Activated CD8-positive, alpha-beta T cell treated with anti-CD3 and anti-CD28 coated beads for 36 hours (primary cell): ENCODE measurements at regions of chr7 and their contacts with region 1.

Region 1: DNA sequence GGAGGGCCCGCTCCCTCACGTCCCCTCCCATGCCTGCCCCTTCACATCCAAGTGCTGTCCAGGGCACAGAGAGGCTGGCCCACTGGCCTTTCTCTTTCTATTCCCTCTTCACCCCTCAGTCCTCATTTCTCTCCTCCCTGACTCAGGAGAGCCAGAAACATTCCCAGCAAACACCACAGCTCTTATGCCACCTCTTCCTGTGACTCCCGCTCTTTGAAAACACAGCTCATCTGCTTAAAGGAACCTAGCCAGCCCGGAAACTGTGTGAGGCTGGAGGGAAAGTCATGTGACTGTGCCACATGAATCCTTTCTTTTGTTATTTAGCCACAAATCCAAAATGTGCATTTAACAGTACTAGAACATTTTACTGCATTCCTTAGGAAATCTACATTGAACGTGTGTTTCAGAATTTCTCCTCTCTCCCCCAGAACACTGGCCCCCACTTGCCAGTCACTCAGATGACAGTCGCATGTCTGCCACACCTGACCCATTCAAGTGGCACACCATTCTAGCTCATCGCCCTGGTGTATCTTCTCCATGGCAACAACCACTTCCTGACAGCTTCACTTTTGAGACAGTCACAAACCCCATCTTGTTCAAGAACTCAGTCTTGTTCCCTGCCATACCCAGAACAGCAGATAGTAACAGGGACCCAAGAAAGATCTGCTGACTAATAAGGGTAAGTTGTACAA is 42.8 kb downstream of the GRB10 start:
- DNase-seq: peak; percentile 76
- ATAC-seq: peak; percentile 99
- H3K4me3 Mint-ChIP-seq: peak overlapping the region; percentile 30
- H3K27ac Mint-ChIP-seq: peak overlapping the region; percentile 63
- H3K4me1 Mint-ChIP-seq: peaks cover 17% of the 10 kb centered on the region
- H3K27me3 Mint-ChIP-seq: no peaks in the 10 kb centered on the region
- CTCF ChIP-seq: no peak

Region 2: DNA sequence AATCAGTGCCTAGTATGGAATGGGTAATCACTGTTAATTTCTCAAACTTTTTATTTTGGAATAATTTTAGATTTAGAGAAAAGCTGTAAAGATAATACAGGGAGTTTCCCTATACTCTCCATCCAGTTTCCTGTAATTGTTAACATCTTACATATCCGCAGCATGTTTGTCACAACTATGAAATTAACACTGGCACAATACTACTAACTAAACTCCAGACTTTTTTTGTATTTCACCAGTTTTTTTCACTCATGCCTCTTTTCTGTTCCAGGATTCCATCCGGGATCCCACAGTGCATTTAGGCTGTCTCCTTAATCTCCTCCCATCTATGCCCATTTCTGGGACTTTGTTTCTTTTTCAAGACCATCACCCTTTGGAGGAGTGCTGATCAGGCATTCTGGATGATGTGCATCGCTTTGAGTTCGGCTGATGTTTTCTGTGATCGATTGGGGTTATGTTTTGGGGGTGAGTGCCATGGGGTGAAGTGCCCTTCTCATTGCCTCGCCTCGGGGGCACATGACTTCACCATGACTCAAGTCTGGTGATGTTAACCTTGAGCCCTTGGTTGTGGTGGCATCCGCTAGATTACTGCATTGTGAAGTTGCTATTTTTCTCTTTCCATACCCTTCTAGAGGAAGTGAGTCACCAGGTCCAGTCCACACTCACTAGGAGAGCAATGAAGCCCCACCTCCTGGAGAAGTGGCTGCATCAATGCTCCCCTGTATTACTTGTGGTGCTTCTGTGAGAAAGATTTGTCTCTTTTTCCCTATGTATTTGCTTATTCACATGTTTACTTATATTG is 86.7 kb after region 1 on chr7:
- CTCF ChIA-PET with region 1: no interaction called
- POLR2A ChIA-PET with region 1: no interaction called
- intact Hi-C with region 1: loop called (anchors 5 kb)
- DNase-seq: peak; percentile 78
- ATAC-seq: peak; percentile 99
- H3K4me3 Mint-ChIP-seq: no peak overlapping the region
- H3K27ac Mint-ChIP-seq: peak overlapping the region; percentile 46
- H3K4me1 Mint-ChIP-seq: peaks cover 12% of the 10 kb centered on the region
- H3K27me3 Mint-ChIP-seq: peaks cover 8% of the 10 kb centered on the region
- CTCF ChIP-seq: no peak